ENCODE measurements at regions of chr1 and their contacts with region 1.

Region 1: GRCh38 chr1:117758444-117759316 is 152.8 kb downstream of the TENT5C start:
- DNase-seq: peak; percentile 85
- H3K4me3 ChIP-seq: peak overlapping the region; percentile 3 to 51 (median 23); a peak in 5 of 8 replicates
- H3K27ac ChIP-seq: no peak overlapping the region
- H3K4me1 ChIP-seq: peaks cover 0 to 6% (median 2%) of the 10 kb centered on the region in 4 experiments; a peak in 3 of 7 replicates
- H3K27me3 ChIP-seq: no peaks in the 10 kb centered on the region
- CTCF ChIP-seq: peak; percentile 46 to 93 (median 84)
- EP300 ChIP-seq: no peak
- POLR2A ChIP-seq: no peak
- RAD21 ChIP-seq: peak; percentile 69 to 79

Region 2: DNA sequence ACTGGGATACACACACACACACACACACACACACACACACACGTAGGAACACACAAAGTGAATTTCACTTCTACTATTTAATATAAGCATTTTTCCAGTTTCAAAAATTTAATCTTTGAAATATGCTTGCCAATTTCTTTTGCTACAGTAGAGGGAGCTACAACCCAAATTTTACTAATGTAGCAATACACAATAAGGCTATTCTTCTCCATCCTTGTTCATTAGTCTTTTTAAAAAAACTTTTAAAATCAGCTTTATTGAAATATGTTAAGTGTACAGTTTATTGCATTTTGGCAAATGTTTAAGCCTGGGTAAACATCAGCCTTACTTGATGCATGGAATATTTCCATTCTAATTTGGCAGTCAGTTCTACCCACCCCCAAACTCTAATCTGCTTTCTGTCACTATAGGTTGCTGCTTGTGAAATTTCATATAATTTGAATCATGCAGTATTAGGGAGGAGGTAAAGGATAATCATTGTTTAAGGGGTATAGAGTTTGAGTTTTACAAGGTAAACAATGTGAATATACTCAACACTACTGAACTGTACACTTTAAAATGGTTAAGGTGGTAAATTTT is 245.8 kb before region 1 on chr1:
- CTCF ChIA-PET with region 1: interaction called, 27 read pairs
- POLR2A ChIA-PET with region 1: no interaction called
- DNase-seq: no peak
- H3K4me3 ChIP-seq: no peak overlapping the region
- H3K27ac ChIP-seq: no peak overlapping the region
- H3K4me1 ChIP-seq: no peaks in the 10 kb centered on the region
- H3K27me3 ChIP-seq: no peaks in the 10 kb centered on the region
- CTCF ChIP-seq: peak in 2 of 3 experiments; percentile 28 to 32; a peak in 2 of 4 replicates
- EP300 ChIP-seq: no peak
- POLR2A ChIP-seq: no peak
- RAD21 ChIP-seq: peak in 1 of 2 experiments; percentile 65; a peak in 3 of 4 replicates

Region 3: GRCh38 chr1:117541003-117541402 is 217.7 kb before region 1 on chr1:
- CTCF ChIA-PET with region 1: interaction called, 128 read pairs
- POLR2A ChIA-PET with region 1: no interaction called
- DNase-seq: no peak
- H3K4me3 ChIP-seq: no peak overlapping the region
- H3K27ac ChIP-seq: no peak overlapping the region
- H3K4me1 ChIP-seq: no peaks in the 10 kb centered on the region
- H3K27me3 ChIP-seq: no peaks in the 10 kb centered on the region
- CTCF ChIP-seq: no peak
- EP300 ChIP-seq: no peak
- POLR2A ChIP-seq: no peak
- RAD21 ChIP-seq: no peak

Region 4: GRCh38 chr1:117582451-117582850 is 176.2 kb before region 1 on chr1:
- CTCF ChIA-PET with region 1: interaction called, 20 read pairs
- POLR2A ChIA-PET with region 1: no interaction called
- DNase-seq: no peak
- H3K4me3 ChIP-seq: no peak overlapping the region
- H3K27ac ChIP-seq: no peak overlapping the region
- H3K4me1 ChIP-seq: no peaks in the 10 kb centered on the region
- H3K27me3 ChIP-seq: no peaks in the 10 kb centered on the region
- CTCF ChIP-seq: no peak
- EP300 ChIP-seq: no peak
- POLR2A ChIP-seq: no peak
- RAD21 ChIP-seq: no peak

Region 5: GRCh38 chr1:117685936-117686806 is 72.5 kb before region 1 on chr1:
- CTCF ChIA-PET with region 1: interaction called, 22 read pairs
- POLR2A ChIA-PET with region 1: no interaction called
- DNase-seq: no peak
- H3K4me3 ChIP-seq: no peak overlapping the region
- H3K27ac ChIP-seq: no peak overlapping the region
- H3K4me1 ChIP-seq: no peaks in the 10 kb centered on the region
- H3K27me3 ChIP-seq: no peaks in the 10 kb centered on the region
- CTCF ChIP-seq: peak; percentile 9 to 34 (median 27); a peak in 2 of 4 replicates
- EP300 ChIP-seq: no peak
- POLR2A ChIP-seq: no peak
- RAD21 ChIP-seq: peak; percentile 33 to 37; a peak in 3 of 4 replicates

Region 6: DNA sequence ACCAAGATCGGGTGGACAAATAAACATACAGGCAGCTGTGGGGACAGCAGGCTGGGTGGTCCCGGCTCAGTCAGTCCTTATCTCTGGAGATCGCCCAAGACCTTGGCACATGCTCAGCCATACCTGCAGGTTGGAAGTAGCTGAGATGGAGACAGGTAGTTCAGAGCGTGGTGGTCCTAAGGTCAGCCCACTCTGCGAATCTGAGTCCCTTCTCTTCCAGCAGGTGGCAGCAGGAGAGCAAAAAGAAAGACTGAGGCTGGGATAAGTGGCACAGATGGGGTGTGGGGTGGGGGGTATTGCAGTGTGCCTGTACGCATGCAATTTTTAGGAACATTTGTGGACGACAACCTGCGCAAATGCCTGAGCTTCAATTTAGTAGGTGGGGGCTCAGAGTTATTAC is 48.0 kb before region 1 on chr1:
- CTCF ChIA-PET with region 1: interaction called, 67 read pairs
- POLR2A ChIA-PET with region 1: no interaction called
- DNase-seq: peak in 1 of 2 experiments; percentile 54
- H3K4me3 ChIP-seq: no peak overlapping the region
- H3K27ac ChIP-seq: no peak overlapping the region
- H3K4me1 ChIP-seq: peaks cover 6 to 12% (median 9%) of the 10 kb centered on the region in 4 experiments
- H3K27me3 ChIP-seq: no peaks in the 10 kb centered on the region; a peak in 1 of 7 replicates
- CTCF ChIP-seq: peak; percentile 66 to 81 (median 67)
- EP300 ChIP-seq: no peak
- POLR2A ChIP-seq: no peak
- RAD21 ChIP-seq: peak; percentile 60 to 73

Region 7: GRCh38 chr1:117740496-117740895 is 18.2 kb before region 1 on chr1:
- CTCF ChIA-PET with region 1: interaction called, 17 read pairs
- POLR2A ChIA-PET with region 1: no interaction called
- DNase-seq: no peak
- H3K4me3 ChIP-seq: no peak overlapping the region
- H3K27ac ChIP-seq: no peak overlapping the region
- H3K4me1 ChIP-seq: no peaks in the 10 kb centered on the region
- H3K27me3 ChIP-seq: no peaks in the 10 kb centered on the region
- CTCF ChIP-seq: no peak
- EP300 ChIP-seq: no peak
- POLR2A ChIP-seq: no peak
- RAD21 ChIP-seq: no peak

Region 8: GRCh38 chr1:117905020-117905419 is 146.3 kb after region 1 on chr1:
- CTCF ChIA-PET with region 1: no interaction called
- POLR2A ChIA-PET with region 1: no interaction called
- DNase-seq: no peak
- H3K4me3 ChIP-seq: no peak overlapping the region
- H3K27ac ChIP-seq: no peak overlapping the region
- H3K4me1 ChIP-seq: no peaks in the 10 kb centered on the region
- H3K27me3 ChIP-seq: no peaks in the 10 kb centered on the region
- CTCF ChIP-seq: no peak
- EP300 ChIP-seq: no peak
- POLR2A ChIP-seq: no peak
- RAD21 ChIP-seq: no peak

Measured in H1 (cell line).